ENCODE measurements at regions of chr16 and their contacts with region 1.

Region 1: GRCh38 chr16:56729735-56730662 is at the start of gene NUP93:
- DNase-seq: peak; percentile 97
- H3K4me3 Mint-ChIP-seq: no peak within 1 kb of the TSS
- H3K27ac Mint-ChIP-seq: peak within 1 kb of the TSS; percentile 81
- H3K4me1 Mint-ChIP-seq: peaks cover 17% of the 10 kb centered on the region
- H3K27me3 Mint-ChIP-seq: no peaks in the 10 kb centered on the region
- total RNA-seq, gene NUP93: 162 and 168 TPM in 2 replicates

Region 2: DNA sequence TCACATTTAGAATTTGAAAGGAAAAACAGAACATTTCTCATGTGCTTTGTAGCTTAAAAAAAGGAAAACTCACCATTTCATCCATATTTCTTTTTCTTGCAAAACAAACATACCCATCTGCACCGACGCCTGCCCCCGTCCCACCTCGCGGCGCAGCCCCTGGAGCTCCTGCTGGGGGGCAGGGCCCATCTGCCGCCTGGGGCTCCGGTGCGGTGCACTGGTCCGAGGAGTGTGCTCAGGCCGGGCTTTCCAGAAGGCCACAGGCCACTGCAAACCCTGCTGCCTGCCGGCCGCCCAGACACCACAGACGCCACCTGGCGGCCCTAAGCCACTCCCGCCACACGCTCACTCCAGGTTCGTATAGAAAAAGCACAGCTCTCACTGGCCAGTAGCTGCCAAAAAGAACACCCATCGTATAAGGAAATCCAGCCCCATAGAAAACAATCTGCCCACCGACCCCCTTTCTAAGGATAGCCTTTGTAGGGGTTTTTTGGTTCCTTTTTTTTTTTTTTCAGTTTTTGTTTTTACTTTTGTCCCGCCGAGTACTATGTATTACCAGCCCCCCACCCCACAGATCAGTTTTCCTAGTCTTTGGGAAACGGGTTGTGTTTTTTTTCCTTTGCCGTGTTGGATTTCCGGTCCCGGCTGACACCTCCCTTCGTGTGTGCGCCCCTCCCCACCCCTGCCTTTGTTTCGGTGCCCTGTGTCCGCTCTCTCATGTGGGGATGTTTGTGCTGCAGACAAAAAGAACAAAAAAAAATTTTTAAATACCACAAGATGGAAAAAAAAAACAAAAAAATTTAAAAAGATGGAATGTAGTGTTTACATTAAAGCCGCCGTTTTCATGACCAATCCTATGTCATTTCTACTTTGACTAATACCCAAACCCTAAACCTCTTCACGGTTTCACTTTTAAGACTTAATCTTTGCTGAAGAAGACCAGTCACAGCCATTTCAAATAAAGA is 373.4 kb before region 1 on chr16:
- intact Hi-C with region 1: loop called (anchors 5 kb)
- DNase-seq: peak; percentile 88
- H3K4me3 Mint-ChIP-seq: peak overlapping the region; percentile 82
- H3K27ac Mint-ChIP-seq: peak overlapping the region; percentile 97
- H3K4me1 Mint-ChIP-seq: peaks cover 33% of the 10 kb centered on the region
- H3K27me3 Mint-ChIP-seq: no peaks in the 10 kb centered on the region

Region 3: DNA sequence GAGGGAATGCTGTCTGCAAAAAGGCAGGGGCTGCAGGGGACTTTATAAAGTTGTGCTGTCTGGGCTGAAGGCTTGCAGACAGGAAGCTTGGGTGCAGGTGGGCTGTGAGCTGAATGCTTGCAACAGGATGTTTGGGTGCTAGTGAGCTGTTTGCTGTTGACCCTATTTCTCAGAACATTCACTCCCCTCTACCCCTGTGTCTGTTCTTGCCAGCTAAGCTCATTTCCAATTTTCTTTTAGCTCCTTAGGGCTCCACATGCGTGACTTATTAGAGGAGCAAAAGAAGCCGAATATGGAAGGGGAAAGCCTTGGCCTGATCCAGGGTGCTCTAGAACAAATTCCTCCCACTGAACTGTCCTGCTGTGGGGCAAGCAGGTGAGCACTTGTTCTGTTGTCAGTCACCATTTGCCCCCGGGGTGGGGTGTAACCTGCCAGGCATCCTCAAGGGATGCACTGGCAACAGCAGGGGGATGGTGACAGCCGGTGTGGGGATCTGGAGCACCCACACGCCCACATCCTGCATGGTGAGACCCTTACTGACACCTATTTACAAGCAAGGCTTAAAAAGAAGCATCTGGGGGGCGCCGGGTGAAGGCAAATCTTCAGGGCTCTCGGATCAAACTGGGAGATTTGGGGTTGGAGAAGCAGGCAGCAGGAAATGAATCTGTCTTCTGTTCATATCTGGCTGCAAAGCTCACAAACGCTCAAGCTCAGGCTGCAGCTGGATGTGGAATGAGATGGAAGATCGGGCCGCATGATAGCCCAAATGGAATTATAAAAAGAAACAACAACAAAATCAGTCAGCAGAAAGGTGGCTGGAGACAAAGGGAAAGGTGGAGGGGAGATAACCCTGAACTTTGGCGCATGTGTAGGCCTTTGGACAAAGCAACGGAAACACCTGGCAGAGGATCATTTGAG is 21.2 kb before region 1 on chr16:
- intact Hi-C with region 1: loop called (anchors 2 kb)
- DNase-seq: peak; percentile 76
- H3K4me3 Mint-ChIP-seq: peak overlapping the region; percentile 67
- H3K27ac Mint-ChIP-seq: peak overlapping the region; percentile 73
- H3K4me1 Mint-ChIP-seq: peaks cover 29% of the 10 kb centered on the region
- H3K27me3 Mint-ChIP-seq: no peaks in the 10 kb centered on the region

Region 4: GRCh38 chr16:57535680-57536305 is 805.8 kb after region 1 on chr16:
- intact Hi-C with region 1: loop called (anchors 5 kb)
- DNase-seq: peak; percentile 98
- H3K4me3 Mint-ChIP-seq: peak overlapping the region; percentile 86
- H3K27ac Mint-ChIP-seq: peak overlapping the region; percentile 89
- H3K4me1 Mint-ChIP-seq: peaks cover 63% of the 10 kb centered on the region
- H3K27me3 Mint-ChIP-seq: no peaks in the 10 kb centered on the region

Measured in activated CD4-positive, alpha-beta T cell treated with anti-CD3 and anti-CD28 coated beads, Interleukin-2, amount 10 ng/mL, durations not matched to agents 24 days and 14 days (primary cell).